GM12878 (cell line): ENCODE measurements at regions of chr3 and their contacts with region 1.

Region 1: GRCh38 chr3:115930922-115931321 is 307.6 kb downstream of the GAP43 start:
- DNase-seq: peak; percentile 25
- ATAC-seq: peak; percentile 92
- H3K4me3 ChIP-seq: no peak overlapping the region
- H3K27ac ChIP-seq: no peak overlapping the region
- H3K4me1 ChIP-seq: peaks cover 11% of the 10 kb centered on the region; the same call in 1 of the 2 replicates
- H3K27me3 ChIP-seq: no peaks in the 10 kb centered on the region
- CTCF ChIP-seq: no peak
- EP300 ChIP-seq: no peak
- POLR2A ChIP-seq: no peak
- RAD21 ChIP-seq: no peak

Region 2: GRCh38 chr3:115369021-115369420 is 561.9 kb before region 1 on chr3:
- CTCF ChIA-PET with region 1: no interaction called
- POLR2A ChIA-PET with region 1: no interaction called
- RAD21 ChIA-PET with region 1: no interaction called
- SMC1A ChIA-PET with region 1: no interaction called
- in situ Hi-C with region 1: no loop called
- intact Hi-C with region 1: no loop called
- DNase-seq: no peak
- ATAC-seq: no peak
- H3K4me3 ChIP-seq: no peak overlapping the region
- H3K27ac ChIP-seq: no peak overlapping the region
- H3K4me1 ChIP-seq: no peaks in the 10 kb centered on the region
- H3K27me3 ChIP-seq: no peaks in the 10 kb centered on the region
- CTCF ChIP-seq: no peak
- EP300 ChIP-seq: no peak
- POLR2A ChIP-seq: no peak
- RAD21 ChIP-seq: no peak

Region 3: GRCh38 chr3:115943579-115943978 is 12.7 kb after region 1 on chr3:
- CTCF ChIA-PET with region 1: interaction called, 10 read pairs
- POLR2A ChIA-PET with region 1: interaction called, 3 read pairs
- RAD21 ChIA-PET with region 1: interaction called, 5 read pairs
- SMC1A ChIA-PET with region 1: interaction called, 36 read pairs
- in situ Hi-C with region 1: no loop called
- intact Hi-C with region 1: no loop called
- DNase-seq: no peak
- ATAC-seq: peak; percentile 73
- H3K4me3 ChIP-seq: no peak overlapping the region
- H3K27ac ChIP-seq: no peak overlapping the region
- H3K4me1 ChIP-seq: no peaks in the 10 kb centered on the region; the same call in 1 of the 2 replicates
- H3K27me3 ChIP-seq: no peaks in the 10 kb centered on the region
- CTCF ChIP-seq: no peak
- EP300 ChIP-seq: no peak
- POLR2A ChIP-seq: no peak
- RAD21 ChIP-seq: no peak